RWPE1 (cell line): ENCODE measurements at regions of chr6 and their contacts with region 1.

Region 1: DNA sequence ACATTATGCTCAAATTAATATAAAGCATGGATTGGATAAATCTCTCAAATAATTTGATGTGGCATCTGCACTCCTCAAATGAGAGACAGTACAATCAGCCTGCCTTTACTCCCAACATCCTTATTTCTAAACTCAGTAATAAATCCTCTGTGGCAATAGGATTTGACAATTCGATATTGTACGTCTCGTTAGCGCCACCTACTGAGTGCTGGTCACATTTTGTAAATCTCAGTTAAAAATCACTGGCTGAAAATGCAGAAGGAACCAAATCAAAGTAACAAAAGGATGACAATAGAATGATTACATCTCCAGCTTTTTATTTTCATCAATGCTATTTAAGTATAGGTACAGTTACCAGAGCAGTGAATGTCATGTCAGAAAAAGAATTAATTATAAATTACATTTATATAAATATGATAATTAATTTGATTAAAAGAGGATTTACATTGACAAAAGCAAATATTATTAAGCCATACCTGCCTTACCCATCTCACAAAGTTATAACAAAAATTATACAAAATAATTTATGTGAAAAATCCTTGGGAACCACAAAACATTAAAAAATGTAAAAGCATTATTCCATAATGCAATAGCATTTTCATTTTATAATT is 20.2 kb upstream of the GJE1 start:
- DNase-seq: peak; percentile 57
- H3K27ac ChIP-seq: no peak overlapping the region
- CTCF ChIP-seq: peak; percentile 76

Region 2: GRCh38 chr6:141988954-141989705 is 123.4 kb before region 1 on chr6:
- CTCF ChIA-PET with region 1: interaction called, 15 read pairs
- POLR2A ChIA-PET with region 1: no interaction called
- DNase-seq: peak; percentile 62
- H3K27ac ChIP-seq: no peak overlapping the region
- CTCF ChIP-seq: peak; percentile 63

Region 3: DNA sequence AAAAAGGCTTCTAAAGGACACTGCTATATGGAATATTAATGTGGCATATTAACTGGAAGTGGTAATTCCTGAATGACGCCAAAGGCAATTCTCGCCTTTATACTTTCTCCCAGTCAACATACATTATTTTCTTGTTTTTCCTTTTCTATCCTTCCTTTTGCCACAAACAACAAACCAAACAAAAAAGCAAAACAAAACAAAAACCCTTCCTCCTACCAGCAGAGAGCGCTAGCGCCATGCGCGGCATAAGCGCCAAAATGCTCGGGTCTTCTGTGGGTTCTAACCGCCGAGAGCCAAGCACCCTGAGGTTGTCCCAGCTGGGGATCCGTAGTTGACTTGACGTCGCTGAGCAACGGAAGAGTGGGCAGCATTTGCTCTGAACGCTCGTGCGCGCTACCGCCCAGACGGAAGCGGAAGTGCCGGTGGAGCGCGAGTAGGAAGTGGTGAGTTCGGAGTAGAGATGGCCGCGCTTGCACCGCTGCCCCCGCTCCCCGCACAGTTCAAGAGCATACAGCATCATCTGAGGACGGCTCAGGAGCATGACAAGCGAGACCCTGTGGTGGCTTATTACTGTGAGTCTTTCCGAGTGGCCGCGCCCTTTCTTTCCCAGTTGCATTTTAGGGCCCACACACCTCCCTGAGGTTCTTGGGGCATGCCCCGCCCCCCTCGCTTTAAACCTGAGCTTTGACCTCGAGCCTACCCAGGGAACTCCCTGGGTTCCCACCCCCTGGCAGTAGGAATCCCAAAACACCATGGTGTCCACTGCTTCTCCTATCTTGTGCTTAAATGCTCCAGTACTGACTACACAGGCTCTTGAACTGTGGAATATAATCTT is 34.5 kb after region 1 on chr6 and contains the starts of genes NMBR and VTA1:
- CTCF ChIA-PET with region 1: no interaction called
- POLR2A ChIA-PET with region 1: no interaction called
- DNase-seq: peak; percentile 91
- H3K27ac ChIP-seq: peak within 1 kb of the TSS; percentile 64
- CTCF ChIP-seq: peak; percentile 90